Ovary (tissue), 10 donors: ENCODE measurements at regions of chr1 and their contacts with region 1.

Region 1: GRCh38 chr1:39214998-39215873 is 10.7 kb downstream of the MACF1 start:
- DNase-seq: no peak
- H3K4me3 ChIP-seq: no peak overlapping the region
- H3K27ac ChIP-seq: no peak overlapping the region
- H3K4me1 ChIP-seq: peaks cover 23% of the 10 kb centered on the region
- H3K27me3 ChIP-seq: no peaks in the 10 kb centered on the region
- CTCF ChIP-seq: no peak
- EP300 ChIP-seq: no peak
- POLR2A ChIP-seq: no peak

Region 2: DNA sequence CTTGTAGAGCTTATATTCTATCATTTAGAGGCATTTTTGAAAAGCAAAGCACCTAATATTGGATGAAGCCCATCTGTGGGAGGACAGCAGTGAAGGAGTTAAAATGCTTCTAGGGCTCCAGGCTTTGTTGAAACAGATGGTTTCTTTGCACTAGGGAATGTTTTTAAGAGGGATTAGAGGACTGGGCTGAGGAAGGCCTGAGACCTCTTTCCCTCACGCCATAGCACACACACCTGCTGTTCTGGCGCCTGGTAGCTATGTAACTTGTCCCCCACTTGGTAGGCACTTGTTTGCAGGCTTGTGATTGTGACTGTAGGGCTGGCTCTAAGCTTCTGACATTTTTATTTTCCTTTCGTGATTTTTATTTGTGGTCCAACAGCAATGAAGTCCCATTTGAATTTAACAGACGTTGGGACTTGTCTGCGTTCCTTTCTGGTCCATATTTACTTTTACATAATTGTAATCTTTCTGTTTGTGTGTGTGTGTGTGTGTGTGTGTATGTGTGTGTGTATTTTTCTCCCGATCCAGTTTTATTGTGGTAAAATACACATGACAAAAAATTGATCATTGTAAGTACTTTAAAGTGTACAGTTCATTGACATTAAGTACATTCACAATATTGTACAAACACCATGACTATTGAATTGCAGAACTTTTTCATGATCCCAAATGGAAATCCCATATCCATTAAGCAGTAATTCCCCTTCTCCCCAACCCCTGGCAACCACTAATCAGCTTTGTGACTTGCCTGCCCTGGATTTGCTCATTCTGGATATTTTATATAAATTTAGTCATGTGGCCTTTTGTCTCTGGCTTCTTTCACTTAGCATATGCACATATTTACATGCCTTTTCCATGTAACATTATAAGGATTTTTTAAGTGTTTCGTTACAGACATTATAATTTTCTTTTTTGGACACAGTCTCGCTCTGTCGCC is 44.2 kb before region 1 on chr1:
- intact Hi-C with region 1: no loop called
- DNase-seq: no peak
- H3K4me3 ChIP-seq: no peak overlapping the region
- H3K27ac ChIP-seq: no peak overlapping the region
- H3K4me1 ChIP-seq: peaks cover 16% of the 10 kb centered on the region
- H3K27me3 ChIP-seq: no peaks in the 10 kb centered on the region
- CTCF ChIP-seq: no peak
- EP300 ChIP-seq: no peak
- POLR2A ChIP-seq: no peak

Region 3: DNA sequence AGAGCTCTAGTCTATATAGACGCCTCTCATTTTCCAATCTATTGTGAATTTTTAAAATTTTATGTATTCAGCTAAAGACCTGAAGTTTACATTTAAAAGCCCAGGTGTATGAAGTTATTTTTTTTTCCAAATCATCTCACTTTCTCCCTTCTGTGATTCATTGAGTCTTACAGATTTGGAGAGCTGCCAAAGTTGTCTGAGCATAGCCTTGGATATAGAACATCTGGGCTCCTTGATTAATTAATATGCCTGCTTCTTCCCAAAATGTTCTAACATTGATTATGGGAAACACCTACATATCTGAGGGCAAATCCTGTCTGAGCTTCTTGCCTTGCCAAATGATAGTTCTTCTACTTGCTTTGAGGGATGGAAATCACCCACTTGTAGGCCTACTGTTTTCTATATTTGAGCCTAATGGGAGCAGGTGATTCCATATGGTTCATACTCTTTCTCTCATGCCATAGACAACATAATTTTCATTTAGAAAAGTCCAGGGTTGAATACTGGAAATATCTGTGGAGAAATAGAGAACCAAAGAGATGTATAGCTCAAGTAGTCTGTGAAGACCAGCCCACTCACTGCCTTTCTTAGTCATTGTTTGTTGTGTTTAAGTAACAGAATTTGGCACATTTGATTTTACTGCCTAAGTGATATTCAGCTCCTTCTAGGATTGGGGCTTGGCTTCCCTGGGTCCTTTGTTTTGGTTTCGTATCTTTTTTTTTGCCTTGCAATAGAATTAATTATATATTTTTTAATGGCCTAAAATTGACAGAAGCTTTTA is 35.4 kb after region 1 on chr1:
- intact Hi-C with region 1: loop called in 1 of 4 experiments (anchors 5 kb)
- DNase-seq: no peak
- H3K4me3 ChIP-seq: no peak overlapping the region
- H3K27ac ChIP-seq: no peak overlapping the region
- H3K4me1 ChIP-seq: peaks cover 26% of the 10 kb centered on the region
- H3K27me3 ChIP-seq: no peaks in the 10 kb centered on the region
- CTCF ChIP-seq: no peak
- EP300 ChIP-seq: no peak
- POLR2A ChIP-seq: no peak